OCI-LY7 (cell line): ENCODE measurements at regions of chr18 and their contacts with region 1.

Region 1: DNA sequence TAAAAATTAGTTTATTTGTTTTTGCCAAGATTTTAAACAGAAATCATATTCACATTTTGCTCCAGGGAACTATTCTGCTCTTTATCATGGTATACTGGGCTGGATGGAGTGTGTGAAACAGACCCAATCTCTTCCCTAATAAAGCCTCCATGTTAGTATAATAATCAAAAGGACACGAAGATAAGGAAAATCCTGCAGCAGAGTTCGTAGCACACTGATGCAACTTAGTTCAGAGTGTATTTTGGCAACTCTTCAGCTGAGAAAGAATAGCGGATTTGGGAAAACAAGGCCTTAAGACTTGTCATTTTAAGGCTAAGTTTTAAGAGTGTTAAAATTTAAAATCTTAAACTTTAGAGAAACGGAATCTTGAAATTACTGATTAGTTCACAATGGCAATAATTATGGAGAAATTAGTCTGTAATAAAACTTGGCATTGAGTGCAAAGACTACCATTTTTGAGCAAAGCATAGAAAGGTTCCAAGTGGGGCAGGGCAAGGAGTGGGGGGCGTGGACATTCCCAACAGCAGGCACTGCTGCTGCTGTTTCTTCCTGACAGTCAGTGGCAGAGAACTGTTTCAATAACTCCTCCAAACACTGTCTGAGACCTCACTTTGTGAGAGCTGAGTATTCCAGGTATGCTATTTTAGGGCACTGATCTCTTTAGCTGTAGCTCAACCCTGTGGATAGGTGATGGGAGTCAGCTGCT is 225.0 kb downstream of the HRH4 start:
- DNase-seq: no peak
- H3K4me3 ChIP-seq: no peak overlapping the region
- H3K27ac ChIP-seq: no peak overlapping the region
- H3K4me1 ChIP-seq: no peaks in the 10 kb centered on the region
- CTCF ChIP-seq: no peak

Region 2: DNA sequence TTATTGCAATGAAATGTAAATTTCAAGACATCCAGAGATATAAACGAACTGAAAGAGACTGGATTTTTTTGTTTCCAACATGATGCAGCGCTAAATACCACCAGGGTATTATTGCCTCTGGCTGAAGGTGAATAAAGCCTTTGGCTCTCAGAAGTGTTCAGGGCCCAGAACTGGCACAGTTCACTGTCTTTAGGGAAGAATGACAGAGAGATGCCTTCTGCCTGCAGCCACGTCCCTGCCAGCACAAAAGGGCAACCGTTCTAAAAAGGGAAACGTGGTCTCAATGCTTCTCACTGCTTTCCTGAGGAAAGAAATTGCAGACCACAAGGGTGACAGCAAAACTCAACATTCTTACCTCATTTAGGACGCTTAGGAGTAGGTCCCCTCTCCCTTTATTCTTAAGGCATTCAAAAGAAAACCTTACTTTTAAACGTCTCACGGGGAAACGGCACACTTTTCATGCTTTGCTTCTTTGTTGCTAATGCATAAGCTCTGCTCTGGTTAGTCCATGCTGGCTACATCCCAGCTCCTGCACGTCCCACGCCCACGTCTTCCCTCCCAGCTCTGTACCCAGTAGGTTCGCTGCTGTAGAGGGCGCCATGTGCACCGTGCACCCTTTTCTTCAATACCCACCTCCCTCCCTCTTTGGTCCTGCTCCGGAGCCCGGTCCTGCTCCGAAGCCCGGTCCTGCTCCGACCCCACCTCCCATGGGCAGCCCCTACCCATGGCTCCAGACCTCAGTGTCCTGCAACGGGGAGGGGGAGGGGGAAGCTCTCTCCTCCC is 54.0 kb before region 1 on chr18:
- CTCF ChIA-PET with region 1: no interaction called
- POLR2A ChIA-PET with region 1: no interaction called
- intact Hi-C with region 1: loop called (anchors 5 kb)
- DNase-seq: no peak
- H3K4me3 ChIP-seq: no peak overlapping the region
- H3K27ac ChIP-seq: no peak overlapping the region
- H3K4me1 ChIP-seq: no peaks in the 10 kb centered on the region
- CTCF ChIP-seq: no peak